Right ventricle myocardium inferior (tissue), 1 donor: ENCODE measurements at regions of chr3 and their contacts with region 1.

Region 1: GRCh38 chr3:107938143-107938542 is 152.7 kb downstream of the CD47 start:
- DNase-seq: no peak
- ATAC-seq: peak; percentile 59

Region 2: DNA sequence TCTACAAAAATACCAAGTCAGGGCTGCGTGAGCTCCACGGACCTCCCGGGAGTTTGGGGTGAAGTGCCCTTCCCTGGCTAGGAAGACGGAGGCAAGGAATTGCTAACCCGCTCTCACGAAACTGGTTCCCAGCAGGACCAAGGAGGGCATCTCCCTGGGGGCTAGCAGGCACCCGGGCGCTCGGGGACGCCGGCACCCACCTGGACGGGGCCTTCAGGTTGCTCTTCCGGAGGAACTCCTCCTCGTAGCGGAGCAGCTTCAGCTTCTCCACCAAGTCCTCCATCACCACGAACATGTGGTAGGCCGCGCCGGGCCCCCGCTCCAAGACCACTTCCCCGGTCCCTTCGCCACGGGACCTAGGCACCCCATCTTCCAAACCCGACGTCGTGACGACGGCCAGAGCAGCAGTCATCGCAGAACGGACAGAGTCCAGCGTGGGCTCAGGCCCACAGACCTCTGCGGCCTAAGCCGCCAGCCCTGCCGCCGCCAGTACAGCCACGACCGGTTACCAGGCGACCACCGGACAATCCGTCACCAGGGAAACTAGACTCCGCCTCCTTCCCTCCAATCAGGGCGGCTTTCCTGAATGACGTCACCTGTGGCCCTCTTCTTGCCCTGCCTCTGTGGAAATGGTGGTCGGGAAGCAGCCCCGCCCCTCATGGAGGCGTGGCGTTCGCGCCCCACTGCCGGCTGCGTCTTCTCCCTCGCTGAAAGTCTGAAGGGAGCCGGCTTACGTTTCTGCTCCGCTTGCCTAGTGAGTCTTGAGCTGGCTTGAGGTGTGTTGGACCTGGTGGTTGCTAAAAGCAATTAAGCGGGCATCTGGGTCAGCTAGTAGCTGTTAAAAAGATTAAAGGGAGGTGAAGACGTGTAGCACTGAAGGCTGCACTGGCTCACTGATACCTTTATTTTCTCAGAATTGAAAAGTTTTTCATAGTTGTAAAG is 284.0 kb after region 1 on chr3 and contains the start of gene IFT57:
- intact Hi-C with region 1: loop called (anchors 5 kb)
- DNase-seq: peak; percentile 95
- ATAC-seq: peak; percentile 100
- total RNA-seq, gene IFT57: 27.6 TPM

Region 3: GRCh38 chr3:108406661-108407206 is 468.6 kb after region 1 on chr3:
- intact Hi-C with region 1: loop called (anchors 1 kb)
- DNase-seq: no peak
- ATAC-seq: peak; percentile 64

Region 4: GRCh38 chr3:108477511-108478147 is 539.5 kb after region 1 on chr3:
- intact Hi-C with region 1: loop called (anchors 5 kb)
- DNase-seq: no peak
- ATAC-seq: no peak